Stomach (tissue), 19 donors: ENCODE measurements at regions of chr6 and their contacts with region 1.

Region 1: GRCh38 chr6:160030103-160030502 is 61.2 kb downstream of the IGF2R start:
- DNase-seq: peak; percentile 62 to 95
- H3K4me3 ChIP-seq: no peak overlapping the region
- H3K27ac ChIP-seq: peak overlapping the region in 4 of 5 donors; percentile 31 to 69 (median 58)
- H3K4me1 ChIP-seq: peaks cover 0 to 16% (median 4%) of the 10 kb centered on the region in 4 donors
- H3K27me3 ChIP-seq: no peaks in the 10 kb centered on the region
- CTCF ChIP-seq: no peak
- EP300 ChIP-seq: no peak
- POLR2A ChIP-seq: no peak

Region 2: DNA sequence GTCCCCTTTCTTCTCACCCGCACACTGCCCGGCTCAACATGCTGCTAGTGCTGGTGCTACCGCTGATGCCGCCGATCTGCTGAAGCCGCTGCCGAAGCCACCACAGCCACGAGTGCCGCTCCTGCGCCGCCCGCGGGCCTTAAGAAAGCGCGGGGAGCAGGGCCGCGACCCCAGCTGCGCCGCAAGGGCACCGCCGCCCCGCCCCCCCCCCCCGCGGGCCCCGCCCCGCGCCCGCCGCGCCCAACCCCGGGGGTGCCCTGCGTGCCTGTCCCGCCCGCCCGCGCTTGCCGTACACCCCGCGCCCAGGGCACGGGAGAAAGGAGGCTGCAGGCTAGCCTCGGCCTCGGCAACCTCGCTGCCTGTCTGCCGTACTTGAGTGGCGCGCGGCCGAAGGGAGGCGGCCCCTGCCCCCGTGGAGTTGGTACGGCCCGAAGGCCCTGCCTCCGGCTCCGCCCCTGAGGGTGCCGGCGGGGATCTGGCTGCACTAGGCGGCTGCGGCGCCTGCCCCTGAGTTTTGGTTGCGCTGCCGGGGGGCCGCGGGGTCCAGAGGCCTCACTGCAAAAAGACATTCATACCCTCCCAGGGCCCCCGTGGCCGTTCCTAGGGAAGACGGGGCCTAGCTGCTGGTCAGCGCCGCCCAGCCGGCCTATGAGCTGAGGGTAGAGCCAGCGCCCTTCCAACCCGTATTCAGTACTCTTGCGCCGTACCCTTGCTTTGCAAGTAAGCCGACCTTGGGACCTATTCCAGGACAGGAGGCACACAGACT is 336.8 kb before region 1 on chr6 and contains the start of gene SOD2:
- intact Hi-C with region 1: no loop called
- DNase-seq: peak; percentile 89 to 94
- H3K4me3 ChIP-seq: peak within 1 kb of the TSS; percentile 78 to 98 (median 93)
- H3K27ac ChIP-seq: peak within 1 kb of the TSS; percentile 95 to 99 (median 97)
- H3K4me1 ChIP-seq: peaks cover 31 to 55% (median 46%) of the 10 kb centered on the region in 4 donors
- H3K27me3 ChIP-seq: no peaks in the 10 kb centered on the region
- CTCF ChIP-seq: no peak
- EP300 ChIP-seq: no peak
- POLR2A ChIP-seq: peak in 2 of 4 donors; percentile 43 to 55
- total RNA-seq, gene SOD2: 27.2 to 187 (median 147) TPM

Region 3: DNA sequence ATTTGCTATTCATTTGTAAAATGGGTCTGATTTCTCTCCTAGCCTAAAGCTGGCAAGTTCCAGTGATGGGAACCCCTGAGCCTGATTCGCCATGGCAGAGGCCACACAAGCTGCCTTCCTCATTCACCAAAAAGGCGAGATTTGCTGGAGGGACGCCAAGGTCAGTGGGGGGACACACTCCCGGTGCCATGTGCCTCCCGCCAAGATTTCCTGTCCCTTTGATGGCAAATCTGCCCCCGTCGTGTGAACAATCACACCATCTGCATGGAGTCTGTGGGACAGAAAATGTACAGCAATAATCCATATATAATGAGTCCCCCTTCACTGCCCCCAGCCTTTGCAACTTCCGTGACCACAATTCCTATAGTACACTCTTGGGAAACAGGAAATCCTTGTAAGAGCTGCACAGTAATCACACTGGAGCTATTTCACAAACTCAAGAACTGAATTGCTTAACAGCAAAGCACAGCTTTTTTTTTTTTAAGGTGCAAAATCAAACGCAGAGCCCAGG is 77.0 kb before region 1 on chr6:
- intact Hi-C with region 1: no loop called
- DNase-seq: peak; percentile 36 to 40
- H3K4me3 ChIP-seq: no peak overlapping the region
- H3K27ac ChIP-seq: peak overlapping the region in 2 of 5 donors; percentile 21 to 60
- H3K4me1 ChIP-seq: peaks cover 0 to 5% (median 0%) of the 10 kb centered on the region in 4 donors
- H3K27me3 ChIP-seq: no peaks in the 10 kb centered on the region
- CTCF ChIP-seq: no peak
- EP300 ChIP-seq: no peak
- POLR2A ChIP-seq: no peak

Region 4: DNA sequence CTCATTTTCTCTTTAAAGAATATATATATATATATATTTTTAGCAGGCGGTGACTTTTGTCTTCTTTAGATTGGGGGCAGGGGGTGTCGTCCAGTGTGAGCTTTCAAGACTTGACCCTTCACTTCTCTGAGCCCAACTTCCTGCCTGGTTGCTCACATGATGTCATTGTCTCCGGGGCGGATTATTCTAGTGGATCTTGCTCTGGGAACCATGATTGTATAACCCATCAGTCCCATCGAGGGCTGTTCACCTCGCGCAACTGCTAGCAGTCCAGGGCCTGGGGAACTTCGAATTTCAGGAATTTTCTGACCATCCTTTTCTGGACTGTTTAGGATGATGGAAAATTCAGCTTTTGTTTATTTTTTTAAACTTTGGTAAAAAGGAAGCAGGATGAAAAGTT is 60.2 kb before region 1 on chr6:
- intact Hi-C with region 1: loop called (anchors 10 kb)
- DNase-seq: peak; percentile 46 to 91
- H3K4me3 ChIP-seq: peak overlapping the region; percentile 94 to 98 (median 98)
- H3K27ac ChIP-seq: peak overlapping the region; percentile 50 to 97 (median 95)
- H3K4me1 ChIP-seq: peaks cover 23 to 76% (median 53%) of the 10 kb centered on the region in 4 donors
- H3K27me3 ChIP-seq: peaks cover 0 to 1% (median 0%) of the 10 kb centered on the region in 3 donors
- CTCF ChIP-seq: no peak
- EP300 ChIP-seq: no peak
- POLR2A ChIP-seq: no peak

Region 5: DNA sequence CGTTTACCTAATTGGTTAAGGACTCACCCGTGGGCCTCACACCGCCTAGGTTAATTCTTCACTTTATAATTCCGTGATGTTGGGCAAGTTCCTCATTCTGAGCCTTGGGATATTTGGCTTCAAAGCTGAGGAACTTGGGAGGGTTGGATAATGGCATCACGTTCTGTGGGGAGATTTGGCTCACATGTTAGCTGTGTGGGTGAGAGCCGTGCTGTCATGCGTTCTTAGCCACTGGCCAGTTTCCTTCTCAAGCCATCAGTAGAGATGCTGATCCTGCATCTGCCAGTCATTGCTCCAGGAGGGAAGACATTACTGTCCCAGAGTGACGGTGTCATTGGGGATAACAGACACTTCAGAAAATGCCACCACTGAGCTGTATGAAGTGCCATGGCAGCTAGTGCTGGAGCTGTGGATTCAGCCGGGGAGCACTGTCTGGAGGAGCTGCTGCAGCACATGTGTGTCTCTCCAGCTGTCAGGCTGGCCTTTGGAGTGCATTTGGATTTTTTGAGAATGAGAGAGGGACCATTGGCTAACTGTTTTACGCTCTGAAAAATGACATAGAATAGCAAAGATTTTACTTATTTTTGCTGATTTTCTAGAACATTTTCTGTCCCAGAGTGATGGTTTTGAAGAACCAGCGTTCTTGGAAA is 44.7 kb before region 1 on chr6:
- intact Hi-C with region 1: no loop called
- DNase-seq: no peak
- H3K4me3 ChIP-seq: no peak overlapping the region
- H3K27ac ChIP-seq: no peak overlapping the region
- H3K4me1 ChIP-seq: peaks cover 56 to 100% (median 78%) of the 10 kb centered on the region in 4 donors
- H3K27me3 ChIP-seq: no peaks in the 10 kb centered on the region
- CTCF ChIP-seq: no peak
- EP300 ChIP-seq: no peak
- POLR2A ChIP-seq: no peak